ENCODE measurements at regions of chr12 and their contacts with region 1.

Region 1: GRCh38 chr12:108803428-108804105 is 53.8 kb downstream of the SSH1 start:
- DNase-seq: peak; percentile 64
- ATAC-seq: peak; percentile 9; the same call in 1 of the 2 replicates
- H3K4me3 Mint-ChIP-seq: peak overlapping the region; percentile 56
- H3K27ac Mint-ChIP-seq: peak overlapping the region; percentile 97
- H3K4me1 Mint-ChIP-seq: peaks cover 23% of the 10 kb centered on the region
- H3K27me3 Mint-ChIP-seq: no peaks in the 10 kb centered on the region
- CTCF ChIP-seq: peak; percentile 93

Region 2: DNA sequence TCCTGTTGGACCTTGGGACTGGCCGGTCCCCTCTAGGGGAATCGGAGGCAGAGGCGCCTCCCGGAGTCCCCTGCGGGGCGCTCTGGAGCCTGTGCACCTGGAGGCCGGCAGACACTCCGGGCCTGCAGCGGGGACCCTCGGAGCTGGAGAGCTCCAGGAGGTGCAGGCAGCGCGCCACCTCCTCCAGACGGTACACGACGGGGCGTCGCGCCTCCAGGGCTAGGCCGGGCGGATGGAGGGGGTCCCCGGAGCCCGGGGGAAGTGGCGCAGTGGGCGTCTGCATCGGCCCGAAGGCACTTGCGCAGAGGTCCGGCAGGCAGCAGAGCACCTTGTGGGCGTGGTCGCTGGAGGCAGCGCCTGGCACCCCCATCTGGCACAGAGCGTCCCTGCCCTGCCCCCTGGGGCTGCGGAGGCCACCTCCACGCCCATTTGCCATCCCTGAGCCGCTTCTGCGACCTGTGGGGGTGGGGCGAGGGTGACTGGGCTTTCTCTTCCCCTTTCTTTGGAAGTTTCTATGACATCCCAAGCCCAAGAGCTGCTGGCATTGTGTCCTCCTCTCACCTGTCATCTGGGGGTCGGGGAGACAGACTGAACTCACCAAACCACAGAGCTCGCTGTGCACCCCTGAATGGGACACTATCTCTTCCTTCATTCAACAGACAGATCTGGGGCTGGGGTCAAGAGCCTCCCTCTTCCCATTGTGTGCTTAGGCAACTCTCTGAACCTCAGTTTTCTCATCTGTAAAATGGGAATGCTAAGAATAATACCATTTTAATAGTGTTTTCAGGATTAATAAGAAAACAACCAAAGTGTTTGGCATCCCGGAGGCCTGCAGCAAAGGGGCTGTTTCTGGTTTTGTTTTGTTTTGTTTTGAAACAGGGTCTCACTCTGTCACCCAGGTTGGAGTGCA is 34.7 kb before region 1 on chr12:
- CTCF ChIA-PET with region 1: interaction called, 23 read pairs
- POLR2A ChIA-PET with region 1: no interaction called
- DNase-seq: peak; percentile 65
- ATAC-seq: peak; percentile 72
- H3K4me3 Mint-ChIP-seq: peak overlapping the region; percentile 63
- H3K27ac Mint-ChIP-seq: no peak overlapping the region
- H3K4me1 Mint-ChIP-seq: peaks cover 12% of the 10 kb centered on the region; the same call in 1 of the 2 replicates
- H3K27me3 Mint-ChIP-seq: no peaks in the 10 kb centered on the region
- CTCF ChIP-seq: no peak

Region 3: DNA sequence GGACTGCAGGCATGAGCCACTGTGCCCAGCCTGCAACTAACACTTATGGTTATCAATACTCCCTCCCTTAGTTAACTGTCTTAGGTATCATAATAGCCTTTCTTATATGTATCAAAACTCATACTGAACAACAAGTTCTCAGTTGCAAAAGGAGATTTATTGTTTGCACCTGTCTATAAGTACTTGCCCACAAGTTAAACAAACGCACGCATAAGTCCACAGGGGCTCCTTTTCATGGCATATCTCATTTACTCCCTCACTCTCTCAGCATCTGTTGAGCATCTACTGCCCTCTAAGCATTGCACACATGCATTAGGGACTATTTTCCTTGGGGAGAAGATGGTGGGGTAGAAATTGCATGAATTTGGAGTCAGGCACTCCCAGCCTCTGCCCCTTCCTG is 25.5 kb before region 1 on chr12:
- CTCF ChIA-PET with region 1: interaction called, 22 read pairs
- POLR2A ChIA-PET with region 1: no interaction called
- DNase-seq: no peak
- ATAC-seq: no peak
- H3K4me3 Mint-ChIP-seq: no peak overlapping the region
- H3K27ac Mint-ChIP-seq: no peak overlapping the region
- H3K4me1 Mint-ChIP-seq: peaks cover 8% of the 10 kb centered on the region
- H3K27me3 Mint-ChIP-seq: no peaks in the 10 kb centered on the region
- CTCF ChIP-seq: no peak

Region 4: DNA sequence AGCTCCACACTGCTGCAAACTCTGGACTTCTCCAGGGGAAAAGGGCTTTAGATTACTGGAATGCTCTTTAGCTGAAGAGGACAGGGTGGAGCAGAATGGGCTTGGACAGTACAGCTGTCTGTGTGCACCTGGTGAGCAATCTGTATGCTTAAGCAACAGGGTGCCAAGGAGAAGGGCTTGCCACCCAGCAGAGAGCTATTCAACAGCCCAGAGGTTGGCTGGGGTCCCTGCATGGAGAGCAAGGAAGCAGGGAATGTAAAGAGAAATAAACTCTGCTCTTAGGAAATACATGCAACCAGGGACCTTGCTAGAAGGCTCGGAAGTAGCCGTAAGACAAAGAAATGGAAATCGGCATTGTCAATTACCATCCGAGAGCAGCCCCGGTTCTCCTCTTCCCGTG is 19.3 kb before region 1 on chr12:
- CTCF ChIA-PET with region 1: interaction called, 22 read pairs
- POLR2A ChIA-PET with region 1: no interaction called
- DNase-seq: no peak
- ATAC-seq: peak; percentile 50
- H3K4me3 Mint-ChIP-seq: no peak overlapping the region
- H3K27ac Mint-ChIP-seq: peak overlapping the region; percentile 78
- H3K4me1 Mint-ChIP-seq: peaks cover 26% of the 10 kb centered on the region
- H3K27me3 Mint-ChIP-seq: no peaks in the 10 kb centered on the region
- CTCF ChIP-seq: no peak

Region 5: DNA sequence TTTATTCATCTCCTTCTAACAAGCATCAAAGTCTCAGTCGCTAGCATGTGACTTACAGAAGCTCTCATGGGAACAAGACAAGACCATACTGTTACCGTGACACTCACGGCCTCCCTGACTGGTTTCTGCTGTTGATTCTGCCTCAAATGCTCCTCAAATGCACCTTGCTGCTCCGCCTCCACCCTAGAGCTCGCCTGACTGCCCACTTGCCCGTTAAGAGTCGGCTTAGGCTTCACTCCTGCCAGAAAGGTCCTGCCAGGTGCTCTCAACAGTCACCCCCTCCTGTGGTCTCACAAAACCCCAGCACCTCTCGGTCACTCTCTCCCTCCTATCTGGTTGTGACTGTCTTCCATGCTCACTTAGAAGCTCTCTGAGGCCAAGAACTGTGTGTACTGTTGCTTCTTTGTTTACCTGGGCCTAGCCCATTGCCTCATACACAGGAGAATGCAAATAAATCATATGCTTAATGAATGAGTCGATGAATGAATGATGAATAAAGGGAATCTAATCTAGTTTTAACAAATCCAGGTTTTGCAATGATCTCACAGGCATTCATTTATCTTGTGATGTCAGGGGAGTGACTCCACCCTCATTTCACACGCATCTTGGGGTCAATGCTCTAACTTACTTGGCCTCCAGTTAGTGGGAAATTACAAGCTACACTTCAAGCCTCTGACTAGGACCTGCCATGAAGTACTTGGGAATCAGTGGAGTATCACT is 12.5 kb after region 1 on chr12:
- CTCF ChIA-PET with region 1: interaction called, 12 read pairs
- POLR2A ChIA-PET with region 1: no interaction called
- DNase-seq: no peak
- ATAC-seq: no peak
- H3K4me3 Mint-ChIP-seq: no peak overlapping the region
- H3K27ac Mint-ChIP-seq: no peak overlapping the region
- H3K4me1 Mint-ChIP-seq: peaks cover 20% of the 10 kb centered on the region
- H3K27me3 Mint-ChIP-seq: no peaks in the 10 kb centered on the region
- CTCF ChIP-seq: no peak

Region 6: GRCh38 chr12:108826101-108826806 is 22.7 kb after region 1 on chr12:
- CTCF ChIA-PET with region 1: interaction called, 16 read pairs
- POLR2A ChIA-PET with region 1: no interaction called
- DNase-seq: no peak
- ATAC-seq: peak; percentile 26
- H3K4me3 Mint-ChIP-seq: no peak overlapping the region
- H3K27ac Mint-ChIP-seq: peak overlapping the region; percentile 87
- H3K4me1 Mint-ChIP-seq: peaks cover 38% of the 10 kb centered on the region
- H3K27me3 Mint-ChIP-seq: no peaks in the 10 kb centered on the region
- CTCF ChIP-seq: no peak

Region 7: DNA sequence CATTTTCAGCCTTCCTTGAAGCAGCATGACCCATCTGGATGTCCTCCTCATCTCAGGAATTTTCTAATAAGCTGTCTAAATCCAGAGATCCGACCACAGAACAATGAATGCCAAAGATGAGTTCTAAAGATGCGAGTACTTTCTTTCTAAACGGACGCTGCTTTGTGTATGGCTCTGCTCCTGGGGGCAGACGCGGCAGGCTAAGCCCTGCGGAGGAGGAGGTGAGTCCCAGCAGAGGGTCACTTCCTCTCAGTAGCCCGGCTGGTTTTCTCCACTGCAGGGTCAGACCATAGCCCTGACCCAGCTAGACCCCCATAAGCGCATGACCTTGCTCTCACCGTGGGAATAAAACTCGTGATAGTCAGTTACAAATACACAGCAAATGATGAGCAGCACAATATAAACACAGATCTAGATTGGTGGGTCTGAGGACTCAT is 37.1 kb after region 1 on chr12:
- CTCF ChIA-PET with region 1: no interaction called
- POLR2A ChIA-PET with region 1: no interaction called
- DNase-seq: no peak
- ATAC-seq: peak; percentile 12; the same call in 1 of the 2 replicates
- H3K4me3 Mint-ChIP-seq: no peak overlapping the region
- H3K27ac Mint-ChIP-seq: peak overlapping the region; percentile 37
- H3K4me1 Mint-ChIP-seq: peaks cover 35% of the 10 kb centered on the region
- H3K27me3 Mint-ChIP-seq: no peaks in the 10 kb centered on the region
- CTCF ChIP-seq: no peak

Region 8: GRCh38 chr12:108950991-108951739 is 147.6 kb after region 1 on chr12:
- CTCF ChIA-PET with region 1: interaction called, 10 read pairs
- POLR2A ChIA-PET with region 1: no interaction called
- DNase-seq: peak; percentile 74
- ATAC-seq: peak; percentile 92
- H3K4me3 Mint-ChIP-seq: no peak overlapping the region
- H3K27ac Mint-ChIP-seq: no peak overlapping the region
- H3K4me1 Mint-ChIP-seq: 0 out of 2 replicates have a peak, but pooled peaks cover 2% of the 10 kb centered on the region
- H3K27me3 Mint-ChIP-seq: peaks cover 2% of the 10 kb centered on the region; the same call in 1 of the 2 replicates
- CTCF ChIP-seq: peak; percentile 90